CD4-positive, alpha-beta T cell (primary cell): ENCODE measurements at regions of chrX and their contacts with region 1.

Region 1: GRCh38 chrX:39320165-39320564 is 518.9 kb downstream of the MID1IP1 start:
- DNase-seq: no peak
- ATAC-seq: no peak
- H3K4me3 ChIP-seq: no peak overlapping the region
- H3K4me3 Mint-ChIP-seq: no peak overlapping the region
- H3K27ac ChIP-seq: no peak overlapping the region
- H3K27ac Mint-ChIP-seq: peak overlapping the region; percentile 16
- H3K4me1 ChIP-seq: peaks cover 13% of the 10 kb centered on the region
- H3K4me1 Mint-ChIP-seq: peaks cover 51% of the 10 kb centered on the region
- H3K27me3 ChIP-seq: no peaks in the 10 kb centered on the region
- H3K27me3 Mint-ChIP-seq: no peaks in the 10 kb centered on the region
- CTCF ChIP-seq: no peak

Region 2: DNA sequence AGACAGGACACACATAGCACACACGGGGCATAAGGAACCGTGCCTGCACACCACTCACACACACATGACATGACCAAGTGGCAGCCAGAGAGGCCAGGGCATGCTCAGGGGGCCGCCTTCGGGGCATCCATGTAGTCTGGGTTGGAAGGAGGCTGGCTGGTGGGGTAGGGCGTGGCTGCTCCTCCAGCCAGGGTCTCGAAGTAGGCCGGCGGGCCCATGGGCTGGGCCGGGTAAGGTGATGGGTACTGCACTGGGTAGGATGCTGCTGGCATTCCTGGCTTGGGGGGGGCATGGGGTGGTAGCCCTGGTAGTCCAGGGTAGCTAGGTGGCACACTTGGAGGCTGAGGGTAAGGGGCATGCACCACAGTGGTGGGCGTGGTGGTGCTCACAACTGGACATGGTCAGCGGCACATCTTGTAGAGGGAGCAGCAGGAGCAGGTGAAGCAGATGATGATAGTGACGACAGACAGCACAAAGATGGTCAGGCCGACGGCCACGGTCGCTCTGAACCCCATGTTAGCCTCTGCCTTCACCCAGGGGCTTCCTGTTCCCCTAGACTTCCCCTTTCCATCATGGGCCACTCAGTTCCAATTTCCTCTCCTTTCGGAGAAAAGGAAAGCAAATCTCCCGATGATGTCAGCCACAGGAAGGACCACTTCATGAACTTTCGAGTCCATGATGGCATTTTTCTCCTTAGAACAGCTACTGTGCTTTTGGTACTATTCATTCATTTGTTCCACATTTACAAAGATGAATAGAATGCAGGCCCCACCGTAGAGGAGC is 2002.8 kb after region 1 on chrX:
- CTCF ChIA-PET with region 1: no interaction called
- POLR2A ChIA-PET with region 1: no interaction called
- intact Hi-C with region 1: loop called in 1 of 2 experiments (anchors 10 kb)
- DNase-seq: no peak
- ATAC-seq: no peak
- H3K4me3 ChIP-seq: no peak overlapping the region
- H3K4me3 Mint-ChIP-seq: no peak overlapping the region
- H3K27ac ChIP-seq: no peak overlapping the region
- H3K27ac Mint-ChIP-seq: no peak overlapping the region
- H3K4me1 ChIP-seq: no peaks in the 10 kb centered on the region
- H3K4me1 Mint-ChIP-seq: no peaks in the 10 kb centered on the region
- H3K27me3 ChIP-seq: no peaks in the 10 kb centered on the region
- H3K27me3 Mint-ChIP-seq: no peaks in the 10 kb centered on the region
- CTCF ChIP-seq: no peak